Posterior vena cava (tissue), 2 donors: ENCODE measurements at regions of chr14 and their contacts with region 1.

Region 1: DNA sequence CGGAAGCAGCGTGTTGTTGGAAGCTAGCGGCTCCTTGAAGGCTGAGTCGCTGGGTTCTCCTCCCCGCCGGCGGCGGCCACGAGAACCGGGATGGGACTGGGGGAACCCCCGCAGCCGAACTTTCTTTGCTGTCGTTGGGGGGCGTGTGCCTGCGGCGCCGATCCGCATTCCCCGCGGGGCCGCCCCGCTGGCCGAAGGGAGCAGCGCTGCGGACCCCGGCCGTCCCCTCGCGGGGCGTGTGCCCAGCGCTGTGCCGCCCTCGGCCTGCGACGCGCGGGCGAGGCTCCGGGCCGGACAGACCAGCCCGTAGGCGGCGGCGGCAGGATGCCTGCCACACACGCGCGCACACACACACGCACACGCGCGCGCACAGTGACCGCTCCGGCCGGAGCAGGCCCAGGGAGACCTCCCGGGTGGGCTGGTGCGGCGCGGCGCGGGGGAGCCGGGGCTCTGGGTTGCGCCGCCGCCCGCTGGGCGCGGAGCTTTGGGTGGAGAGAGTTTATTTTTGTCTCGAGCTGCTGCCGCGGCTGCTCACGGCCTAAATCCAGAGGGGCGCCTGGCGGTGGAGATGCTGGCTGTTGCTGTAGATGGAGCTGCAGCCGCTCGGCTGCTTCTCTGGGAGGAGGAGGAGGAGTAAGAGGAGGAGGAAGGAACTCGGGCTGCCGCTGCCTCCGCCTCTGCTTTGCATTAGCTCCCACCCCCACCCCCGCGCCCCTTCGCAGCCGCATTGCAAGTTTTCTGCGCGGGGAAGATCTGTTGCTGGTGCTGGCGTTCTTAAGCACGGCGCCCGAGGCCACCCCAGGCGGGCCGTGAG is at the start of gene SAMD4A:
- DNase-seq: peak; percentile 94
- total RNA-seq, gene SAMD4A: 80.4 to 236 TPM

Region 2: GRCh38 chr14:54773171-54773975 is 206.8 kb after region 1 on chr14:
- intact Hi-C with region 1: loop called (anchors 2 kb)
- DNase-seq: peak; percentile 97

Region 3: DNA sequence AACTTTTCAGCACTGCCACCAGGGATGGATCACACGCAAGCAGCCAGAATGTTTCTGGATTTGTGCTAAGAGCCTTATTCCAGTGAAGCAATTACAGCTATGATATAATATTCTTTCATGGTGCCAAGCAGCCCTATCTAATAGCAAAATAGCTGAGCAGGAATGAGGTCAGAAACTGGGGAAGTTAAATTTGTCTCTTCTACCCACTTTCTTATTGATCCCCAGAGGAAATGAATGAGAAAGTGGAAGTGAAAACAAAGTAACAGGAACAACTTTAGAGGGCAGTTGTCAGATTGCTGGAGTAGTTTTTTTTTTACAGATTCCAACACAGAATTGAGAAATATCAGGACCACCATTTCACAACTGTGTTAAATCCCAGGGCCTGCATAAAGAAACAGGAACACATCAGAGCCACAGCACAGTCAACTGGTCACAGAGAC is 291.2 kb after region 1 on chr14:
- intact Hi-C with region 1: no loop called
- DNase-seq: no peak